H1 (cell line): ENCODE measurements at regions of chr3 and their contacts with region 1.

Region 1: DNA sequence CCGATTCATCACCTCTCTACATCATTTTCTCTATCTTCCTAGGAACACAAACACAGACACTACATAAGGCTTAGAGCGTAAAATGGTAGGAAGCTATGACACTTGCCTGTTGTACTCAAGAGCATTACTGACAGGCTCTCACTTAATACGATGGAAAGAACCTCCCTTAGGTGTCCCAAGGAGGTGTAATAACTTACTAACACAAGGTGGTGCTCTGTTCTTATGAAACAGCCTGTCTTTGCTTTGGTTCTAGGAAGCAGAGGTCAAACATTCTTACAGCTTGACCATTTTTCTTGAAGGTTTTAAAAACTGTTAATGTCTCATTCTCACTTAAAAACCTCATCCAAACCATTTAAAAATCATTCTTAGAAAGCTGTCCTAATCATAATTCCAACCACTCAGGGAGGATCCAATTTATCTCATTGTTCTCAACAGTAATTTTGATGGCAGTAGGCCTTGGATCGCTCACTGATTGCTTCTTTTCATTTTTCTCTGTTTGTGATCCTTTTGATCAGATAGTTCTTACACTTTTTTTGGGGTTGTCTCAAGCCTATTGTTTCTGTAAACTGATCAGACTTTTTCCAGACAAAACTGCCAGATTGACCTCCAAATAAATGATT is 317.8 kb upstream of the AGTR1 start:
- DNase-seq: no peak
- H3K4me3 ChIP-seq: no peak overlapping the region
- H3K27ac ChIP-seq: no peak overlapping the region
- H3K4me1 ChIP-seq: no peaks in the 10 kb centered on the region
- H3K27me3 ChIP-seq: no peaks in the 10 kb centered on the region
- CTCF ChIP-seq: peak in 2 of 3 experiments; percentile 66 to 74; a peak in 3 of 4 replicates
- EP300 ChIP-seq: no peak
- POLR2A ChIP-seq: no peak
- RAD21 ChIP-seq: peak; percentile 93 to 94

Region 2: DNA sequence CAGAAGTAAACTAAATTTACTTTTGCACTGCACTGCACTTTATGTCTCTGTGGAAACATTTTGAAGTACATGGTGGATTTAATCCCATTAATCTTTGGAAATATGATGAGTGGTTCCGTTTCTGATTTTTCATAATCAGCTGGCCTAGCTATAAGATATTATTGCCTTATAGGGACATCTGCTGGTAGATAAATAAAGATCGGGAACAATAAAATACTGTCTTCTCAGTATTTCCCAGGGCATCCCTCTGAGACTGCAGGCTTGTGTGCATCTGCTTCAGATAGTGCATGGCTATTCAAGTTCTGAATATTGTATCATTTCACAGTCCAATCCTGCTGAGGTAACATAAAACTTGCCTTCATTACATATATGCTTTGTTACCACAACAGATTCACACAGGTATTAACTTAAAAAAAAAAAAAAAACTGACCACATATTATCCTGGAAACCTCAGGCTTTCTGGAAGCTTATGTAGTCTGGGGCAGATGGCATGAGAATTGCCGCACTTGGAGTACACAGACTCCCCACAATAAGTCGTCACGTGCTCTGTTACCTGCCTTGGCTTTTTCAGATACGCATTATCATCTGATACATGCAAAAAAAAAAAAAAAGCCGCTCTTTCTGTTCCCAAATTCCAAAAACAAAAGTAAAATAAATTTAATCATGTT is 13.0 kb before region 1 on chr3:
- CTCF ChIA-PET with region 1: no interaction called
- POLR2A ChIA-PET with region 1: no interaction called
- DNase-seq: no peak
- H3K4me3 ChIP-seq: no peak overlapping the region
- H3K27ac ChIP-seq: no peak overlapping the region
- H3K4me1 ChIP-seq: no peaks in the 10 kb centered on the region
- H3K27me3 ChIP-seq: no peaks in the 10 kb centered on the region
- CTCF ChIP-seq: no peak
- EP300 ChIP-seq: no peak
- POLR2A ChIP-seq: no peak
- RAD21 ChIP-seq: peak; percentile 44 to 51

Region 3: DNA sequence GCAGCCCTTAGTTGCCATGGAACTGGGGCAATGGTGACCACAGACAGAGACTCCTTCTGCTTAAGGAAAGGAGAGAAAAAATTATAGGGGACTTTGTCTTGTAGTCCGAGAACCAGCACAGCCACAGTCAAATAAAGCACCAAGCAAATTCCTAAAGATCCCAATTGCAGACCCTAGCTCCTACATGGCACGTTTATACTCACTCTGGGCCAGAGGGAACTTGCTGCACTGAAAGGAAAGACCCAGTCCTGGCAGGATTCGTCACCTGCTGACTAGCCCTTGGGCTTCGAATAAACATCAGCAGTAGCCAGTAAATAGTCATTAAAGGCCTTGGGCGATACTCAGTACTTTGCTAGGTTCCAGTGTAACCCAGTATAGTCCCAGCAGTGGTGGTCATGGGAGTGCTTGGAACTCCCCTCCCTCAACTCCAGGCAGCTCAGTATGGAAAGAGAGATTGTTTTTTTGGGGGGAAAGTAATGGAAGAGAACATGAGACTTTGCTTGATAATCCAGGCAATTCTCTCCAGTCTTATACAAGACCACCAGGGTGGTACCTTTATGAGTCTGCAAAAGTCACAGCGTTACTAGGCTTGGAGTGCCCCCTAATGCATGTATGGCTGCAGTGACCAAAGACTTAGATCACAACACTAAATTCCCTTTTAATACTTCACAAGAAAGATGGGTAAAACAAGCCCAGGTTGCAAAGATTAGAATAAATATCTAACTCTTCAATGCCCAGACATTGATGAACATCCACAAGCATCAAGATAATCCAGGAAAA is 251.4 kb after region 1 on chr3:
- CTCF ChIA-PET with region 1: interaction called, 38 read pairs
- POLR2A ChIA-PET with region 1: no interaction called
- DNase-seq: no peak
- H3K4me3 ChIP-seq: no peak overlapping the region
- H3K27ac ChIP-seq: no peak overlapping the region
- H3K4me1 ChIP-seq: no peaks in the 10 kb centered on the region
- H3K27me3 ChIP-seq: no peaks in the 10 kb centered on the region
- CTCF ChIP-seq: peak in 2 of 3 experiments; percentile 69 to 89; a peak in 3 of 4 replicates
- EP300 ChIP-seq: no peak
- POLR2A ChIP-seq: no peak
- RAD21 ChIP-seq: peak; percentile 92 to 95

Region 4: DNA sequence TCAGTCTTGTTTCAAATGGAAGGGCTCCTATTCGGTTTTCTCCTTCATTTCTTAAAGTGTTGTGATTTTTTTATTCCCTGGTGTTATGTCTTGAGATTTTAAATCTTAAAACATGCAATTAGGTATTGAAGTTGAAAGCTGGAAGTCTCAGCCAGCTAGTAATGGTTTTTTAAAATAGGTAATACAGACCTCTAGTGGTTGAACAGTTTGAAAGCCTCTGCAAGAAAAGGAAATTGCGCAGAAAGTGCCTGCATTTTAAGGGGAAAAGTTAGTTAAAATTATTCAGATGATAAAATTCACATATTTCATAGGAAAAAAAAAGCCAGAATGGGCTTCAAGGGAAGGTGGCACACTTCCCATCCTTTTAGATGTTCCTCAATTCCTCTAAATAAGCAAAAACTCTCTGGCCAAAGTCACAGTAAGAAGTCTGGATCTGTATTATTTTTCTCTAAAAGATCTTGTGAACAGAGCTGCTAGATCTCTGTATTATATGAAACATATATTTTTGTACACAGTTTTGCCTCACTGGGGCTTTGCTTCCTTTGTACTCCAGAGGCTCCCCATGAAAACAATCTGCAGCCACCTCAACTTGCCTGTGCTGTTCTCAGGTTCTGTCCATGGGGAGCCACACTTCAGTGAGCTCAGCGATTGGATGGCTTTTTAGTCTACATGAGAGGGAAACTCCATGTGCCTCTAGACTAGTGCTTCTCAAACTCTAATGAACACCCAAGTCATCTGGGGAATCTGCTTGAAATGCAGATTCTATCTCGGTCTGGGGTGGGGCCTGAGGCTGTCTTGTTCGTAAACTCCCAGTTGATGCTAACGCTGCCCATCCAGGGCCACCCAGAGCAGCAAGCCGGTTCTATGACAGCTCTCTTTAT is 339.3 kb after region 1 on chr3:
- CTCF ChIA-PET with region 1: interaction called, 21 read pairs
- POLR2A ChIA-PET with region 1: no interaction called
- DNase-seq: no peak
- H3K4me3 ChIP-seq: no peak overlapping the region
- H3K27ac ChIP-seq: no peak overlapping the region
- H3K4me1 ChIP-seq: peaks cover 0 to 4% (median 3%) of the 10 kb centered on the region in 4 experiments; a peak in 5 of 7 replicates
- H3K27me3 ChIP-seq: no peaks in the 10 kb centered on the region
- CTCF ChIP-seq: peak in 2 of 3 experiments; percentile 15 to 16; a peak in 2 of 4 replicates
- EP300 ChIP-seq: no peak
- POLR2A ChIP-seq: no peak
- RAD21 ChIP-seq: peak; percentile 46 to 49